Adrenal gland (tissue), 19 donors: ENCODE measurements at regions of chr3 and their contacts with region 1.

Region 1: DNA sequence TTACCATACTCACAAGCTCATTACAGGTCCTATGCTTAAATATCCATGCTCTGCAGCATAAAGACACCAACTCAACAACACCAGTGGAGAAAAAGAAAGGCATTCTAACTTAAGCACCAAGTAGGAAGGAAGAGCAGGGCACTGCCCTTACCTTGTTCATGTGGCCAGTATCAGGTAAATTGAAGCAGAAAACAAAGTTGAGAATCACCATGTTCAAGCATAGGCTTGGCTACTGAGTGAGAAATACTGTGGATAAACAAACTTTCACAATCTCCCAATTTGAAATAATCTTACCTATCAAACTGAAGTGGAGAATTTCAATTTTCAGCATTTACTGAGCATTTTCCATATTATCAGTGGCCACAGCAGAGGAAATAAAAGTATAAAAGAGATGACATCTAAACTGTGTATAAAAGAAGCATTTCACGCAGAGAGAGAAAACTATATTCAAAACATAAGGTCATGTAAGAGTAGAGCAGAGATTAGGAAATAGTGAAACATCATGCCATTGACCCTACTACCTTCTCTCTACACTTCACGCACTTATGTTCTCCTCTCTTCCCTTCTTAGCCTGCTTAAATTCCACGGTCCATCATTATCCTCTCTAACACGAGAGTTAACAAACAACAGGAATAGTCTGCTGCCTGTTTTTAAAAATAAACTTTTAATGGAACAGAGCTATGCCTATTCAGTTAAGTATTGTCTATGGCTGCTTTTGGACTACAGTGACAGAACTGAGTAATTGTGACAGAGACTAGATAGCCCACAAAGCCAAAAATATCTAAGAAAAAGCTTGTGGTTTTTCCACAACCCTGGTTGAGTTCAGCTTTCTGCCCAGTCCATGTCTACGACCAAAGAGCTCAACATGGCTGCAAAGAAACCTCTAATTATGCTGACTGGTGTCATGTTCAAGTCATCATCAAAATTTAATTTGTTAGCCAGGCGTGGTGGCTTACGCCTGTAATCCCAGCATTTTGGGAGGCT is 142.5 kb downstream of the NR1I2 start:
- DNase-seq: no peak
- H3K4me3 ChIP-seq: no peak overlapping the region
- H3K27ac ChIP-seq: no peak overlapping the region
- H3K4me1 ChIP-seq: no peaks in the 10 kb centered on the region
- H3K27me3 ChIP-seq: no peaks in the 10 kb centered on the region
- CTCF ChIP-seq: no peak
- POLR2A ChIP-seq: no peak

Region 2: DNA sequence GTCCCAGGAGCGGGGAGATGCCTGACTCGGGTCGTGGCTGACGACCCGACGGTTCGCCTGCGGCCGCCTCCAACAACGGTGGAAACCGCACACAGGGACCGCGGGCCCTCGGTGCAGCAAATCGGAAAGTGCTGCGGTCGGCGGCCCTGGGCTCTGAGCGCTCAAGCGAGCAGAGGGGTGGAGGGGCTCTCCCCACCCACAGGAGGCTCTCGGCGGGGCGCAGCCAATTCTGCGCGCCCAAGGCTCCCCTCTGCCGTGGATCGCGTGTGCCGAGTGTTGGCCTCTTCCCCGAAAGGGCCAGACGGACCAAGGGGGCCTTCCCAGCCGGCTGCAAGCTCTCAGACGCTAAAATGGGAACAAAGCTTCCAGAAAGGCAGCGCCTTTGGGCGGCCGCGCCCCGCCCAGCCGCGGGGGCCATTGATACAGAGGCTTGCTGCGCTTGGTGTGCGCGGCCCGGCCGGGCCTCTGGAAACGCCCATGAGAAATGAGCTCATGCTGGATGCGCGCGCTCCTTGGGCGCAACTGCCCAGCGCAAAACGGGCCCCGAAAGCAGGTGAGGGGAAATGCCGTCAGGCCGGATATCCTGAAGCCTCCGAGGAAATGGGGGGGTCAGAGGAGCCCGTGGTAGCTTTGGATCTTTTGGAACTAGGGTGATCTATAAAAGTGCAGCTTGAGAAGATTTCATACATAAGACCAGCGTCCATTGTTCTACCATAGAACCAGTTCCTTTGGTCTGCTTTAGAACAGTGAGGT is 171.0 kb after region 1 on chr3:
- intact Hi-C with region 1: loop called in 1 of 2 experiments (anchors 10 kb)
- DNase-seq: peak; percentile 88 to 96 (median 93)
- H3K4me3 ChIP-seq: peak overlapping the region in 3 of 4 donors; percentile 84 to 87 (median 85)
- H3K27ac ChIP-seq: peak overlapping the region; percentile 87 to 100 (median 99)
- H3K4me1 ChIP-seq: peaks cover 15 to 40% of the 10 kb centered on the region in 2 donors
- H3K27me3 ChIP-seq: no peaks in the 10 kb centered on the region
- CTCF ChIP-seq: no peak
- POLR2A ChIP-seq: peak; percentile 95 to 99